AG04450 (cell line): ENCODE measurements at regions of chr2 and their contacts with region 1.

Region 1: DNA sequence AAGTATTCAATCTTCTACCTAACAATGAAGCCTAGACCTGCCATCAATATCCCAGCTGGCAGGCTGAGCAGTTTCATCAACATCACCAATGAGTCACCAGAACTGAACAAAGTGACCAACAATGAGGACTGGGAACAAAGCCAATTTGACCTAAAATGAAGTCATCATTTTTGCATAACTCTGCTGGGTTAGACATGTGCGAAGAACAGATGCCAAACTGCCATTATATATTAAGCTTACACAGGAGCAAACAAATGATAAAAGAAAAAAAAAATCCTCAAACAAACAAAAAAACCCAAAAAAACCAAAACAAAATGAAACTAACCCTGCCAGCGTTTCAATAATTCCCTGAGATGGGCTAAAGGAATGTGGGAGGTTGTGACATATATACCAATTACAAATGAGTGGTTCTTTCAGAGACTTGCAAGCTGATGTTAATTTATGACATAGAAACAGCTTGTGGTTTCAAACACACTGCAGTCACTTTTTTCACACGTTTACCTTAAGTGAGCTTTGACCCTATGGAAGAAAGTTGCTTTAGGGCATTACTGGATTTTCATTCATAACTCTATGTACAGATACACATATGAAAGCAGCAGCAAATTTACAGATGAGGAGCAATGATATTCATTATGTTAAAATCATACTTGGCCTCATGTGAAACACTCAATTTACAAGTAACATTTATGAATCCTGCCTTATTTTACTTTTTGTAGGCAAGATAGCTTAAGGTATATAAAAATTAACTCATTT is 56.9 kb upstream of the CCDC141 start:
- DNase-seq: peak; percentile 61
- H3K4me3 ChIP-seq: no peak overlapping the region
- H3K27ac ChIP-seq: no peak overlapping the region
- H3K27me3 ChIP-seq: no peaks in the 10 kb centered on the region
- CTCF ChIP-seq: no peak

Region 2: GRCh38 chr2:179129574-179130238 is 22.9 kb after region 1 on chr2:
- CTCF ChIA-PET with region 1: interaction called, 13 read pairs
- POLR2A ChIA-PET with region 1: no interaction called
- DNase-seq: no peak
- H3K4me3 ChIP-seq: no peak overlapping the region
- H3K27ac ChIP-seq: no peak overlapping the region
- H3K27me3 ChIP-seq: no peaks in the 10 kb centered on the region
- CTCF ChIP-seq: peak; percentile 60